CD4-positive, alpha-beta T cell (primary cell): ENCODE measurements at regions of chr1 and their contacts with region 1.

Region 1: DNA sequence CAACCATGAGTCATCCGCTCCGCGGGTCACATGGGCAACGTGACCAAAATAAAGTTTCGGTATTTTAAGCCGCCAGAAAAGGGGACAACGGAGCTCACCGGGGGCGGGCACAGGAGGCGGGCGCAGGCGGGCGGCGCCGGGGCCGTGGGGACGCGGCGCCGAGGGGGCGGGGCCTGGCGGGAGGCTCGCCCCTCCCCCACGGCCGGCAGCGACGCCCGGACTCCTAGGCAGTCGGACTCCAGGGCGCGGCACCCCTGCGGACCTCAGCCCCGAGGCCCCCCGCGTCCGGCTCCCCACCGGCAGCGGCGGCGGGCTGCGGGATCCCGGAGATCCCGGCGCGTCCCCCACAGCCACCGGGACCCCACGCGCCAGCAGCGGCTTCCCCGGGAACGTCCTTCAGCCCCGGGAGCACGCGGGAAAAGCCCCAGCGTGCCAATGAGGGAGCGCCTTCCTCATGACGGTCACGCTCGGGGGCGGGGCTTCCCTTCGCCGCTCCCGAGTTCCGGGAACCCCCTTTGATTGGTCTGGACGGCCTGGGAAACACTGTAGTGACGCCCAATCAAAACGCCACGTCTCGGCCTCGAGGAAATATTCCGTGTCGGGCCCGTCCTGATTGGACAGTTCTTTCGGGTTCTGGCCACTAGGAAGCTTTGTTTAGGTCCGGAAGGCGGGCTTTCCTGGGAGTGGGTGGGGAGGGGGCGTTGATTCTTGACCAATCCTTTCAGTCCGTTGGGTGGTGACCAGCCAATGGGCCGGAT is 515 bp upstream of the CAMTA1 start:
- DNase-seq: peak; percentile 96 to 100 (median 99)
- ATAC-seq: peak; percentile 23
- H3K4me3 ChIP-seq: peak overlapping the region; percentile 80
- H3K4me3 Mint-ChIP-seq: peak overlapping the region; percentile 97
- H3K27ac ChIP-seq: peak overlapping the region; percentile 88 to 92
- H3K27ac Mint-ChIP-seq: peak overlapping the region; percentile 89
- H3K4me1 ChIP-seq: peaks cover 25% of the 10 kb centered on the region
- H3K4me1 Mint-ChIP-seq: peaks cover 51% of the 10 kb centered on the region
- H3K27me3 ChIP-seq: no peaks in the 10 kb centered on the region
- H3K27me3 Mint-ChIP-seq: no peaks in the 10 kb centered on the region
- CTCF ChIP-seq: no peak

Region 2: DNA sequence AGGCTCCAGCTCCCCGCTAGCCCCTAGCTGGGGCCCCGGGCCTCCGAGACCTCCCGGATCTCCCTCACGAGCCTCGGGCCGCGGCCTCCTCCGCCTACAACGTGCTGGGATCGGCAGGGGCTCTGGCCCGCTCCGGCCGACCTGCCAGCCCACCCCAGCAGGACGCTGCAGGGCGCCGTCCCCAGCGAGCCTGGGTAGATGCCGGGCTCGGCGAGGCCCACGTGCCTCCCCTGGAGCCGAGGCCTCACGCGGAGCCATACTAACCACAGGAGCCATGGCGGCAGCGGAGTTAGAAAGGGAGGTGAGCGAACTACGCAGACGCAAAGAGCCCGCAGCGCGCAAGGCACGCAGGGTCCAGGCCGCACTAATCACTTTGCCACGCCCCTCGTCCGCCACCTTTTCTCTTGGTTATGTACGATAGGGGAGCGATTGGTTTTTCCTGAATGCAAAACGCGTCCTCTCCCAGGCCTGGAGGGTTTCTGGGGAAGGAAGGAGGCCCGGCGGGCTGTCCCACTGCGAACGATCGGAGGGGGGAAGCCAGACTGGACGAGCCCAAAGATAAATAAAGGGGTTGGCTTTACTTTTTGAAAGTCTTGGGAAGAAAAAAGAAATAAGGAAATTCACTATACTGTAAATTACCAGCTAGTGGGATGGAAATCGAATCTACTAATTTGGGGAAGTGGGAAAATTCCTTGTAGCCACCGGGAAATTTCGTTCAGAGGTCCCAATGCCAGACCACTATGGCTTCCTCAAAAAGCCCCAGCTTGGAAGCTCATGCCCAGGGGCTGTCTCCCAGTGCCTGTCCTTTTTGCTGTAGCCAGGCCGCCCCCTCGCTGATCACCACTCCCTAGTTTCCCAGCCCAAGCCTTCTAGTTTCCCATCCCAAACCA is 585.2 kb before region 1 on chr1 and contains the start of gene RPL22:
- CTCF ChIA-PET with region 1: no interaction called
- POLR2A ChIA-PET with region 1: no interaction called
- intact Hi-C with region 1: loop called in 1 of 2 experiments (anchors 5 kb)
- DNase-seq: peak; percentile 93 to 99 (median 96)
- ATAC-seq: peak; percentile 96
- H3K4me3 ChIP-seq: peak within 1 kb of the TSS; percentile 97
- H3K4me3 Mint-ChIP-seq: peak within 1 kb of the TSS; percentile 91
- H3K27ac ChIP-seq: peak within 1 kb of the TSS; percentile 63 to 69
- H3K27ac Mint-ChIP-seq: peak within 1 kb of the TSS; percentile 84
- H3K4me1 ChIP-seq: peaks cover 35% of the 10 kb centered on the region
- H3K4me1 Mint-ChIP-seq: peaks cover 47% of the 10 kb centered on the region
- H3K27me3 ChIP-seq: no peaks in the 10 kb centered on the region
- H3K27me3 Mint-ChIP-seq: no peaks in the 10 kb centered on the region
- CTCF ChIP-seq: no peak
- total RNA-seq, gene RPL22: 620 to 652 TPM

Region 3: DNA sequence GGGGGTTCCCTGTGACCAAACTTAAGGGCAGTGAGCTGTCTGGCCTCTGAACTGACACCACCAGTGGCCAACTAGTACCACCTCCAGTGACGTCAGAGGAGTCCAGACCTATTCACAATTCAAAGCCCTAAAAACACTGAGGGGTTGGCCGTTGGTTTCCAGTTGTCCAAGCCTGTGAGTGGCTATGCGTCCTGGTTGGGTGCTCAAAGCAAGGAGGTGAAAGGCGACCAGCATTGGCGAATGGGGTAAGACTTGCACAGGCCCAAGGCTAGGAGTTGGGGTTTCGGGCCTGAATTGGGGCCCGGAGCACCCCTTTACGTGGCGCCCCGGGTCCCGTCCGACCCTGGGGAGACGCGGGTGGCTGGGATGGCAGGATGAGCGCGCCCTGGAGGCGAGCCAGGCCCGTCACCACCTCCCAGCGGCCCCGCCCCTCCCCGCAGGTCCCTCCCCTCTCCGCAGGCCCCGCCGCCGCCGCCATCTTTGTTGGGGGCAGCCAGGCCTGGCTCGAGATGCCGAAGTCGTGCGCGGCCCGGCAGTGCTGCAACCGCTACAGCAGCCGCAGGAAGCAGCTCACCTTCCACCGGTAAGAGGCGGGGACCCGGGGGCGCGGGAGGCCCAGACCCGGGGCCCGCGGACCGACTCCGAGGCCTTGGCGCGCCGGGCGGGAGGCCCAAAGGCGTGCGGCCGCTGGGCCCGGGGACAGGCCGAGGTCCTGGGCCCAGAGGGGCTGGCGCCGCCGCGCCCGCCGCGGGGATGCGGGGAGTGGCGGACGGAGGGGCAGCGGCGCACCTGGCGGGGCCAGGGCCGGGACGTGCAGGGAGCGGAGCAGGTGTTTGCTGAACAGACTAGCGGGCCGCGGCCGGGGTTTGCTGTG is 159.8 kb before region 1 on chr1 and contains the start of gene THAP3:
- CTCF ChIA-PET with region 1: no interaction called
- POLR2A ChIA-PET with region 1: no interaction called
- intact Hi-C with region 1: loop called in 1 of 2 experiments (anchors 2 kb)
- DNase-seq: peak; percentile 86 to 95 (median 90)
- ATAC-seq: peak; percentile 98
- H3K4me3 ChIP-seq: peak within 1 kb of the TSS; percentile 72
- H3K4me3 Mint-ChIP-seq: peak within 1 kb of the TSS; percentile 94
- H3K27ac ChIP-seq: peak within 1 kb of the TSS in 1 of 2 donors; percentile 38
- H3K27ac Mint-ChIP-seq: peak within 1 kb of the TSS; percentile 84
- H3K4me1 ChIP-seq: peaks cover 31% of the 10 kb centered on the region
- H3K4me1 Mint-ChIP-seq: peaks cover 29% of the 10 kb centered on the region
- H3K27me3 ChIP-seq: no peaks in the 10 kb centered on the region
- H3K27me3 Mint-ChIP-seq: no peaks in the 10 kb centered on the region
- CTCF ChIP-seq: peak; percentile 31
- total RNA-seq, gene THAP3: 15.2 to 18.7 TPM

Region 4: DNA sequence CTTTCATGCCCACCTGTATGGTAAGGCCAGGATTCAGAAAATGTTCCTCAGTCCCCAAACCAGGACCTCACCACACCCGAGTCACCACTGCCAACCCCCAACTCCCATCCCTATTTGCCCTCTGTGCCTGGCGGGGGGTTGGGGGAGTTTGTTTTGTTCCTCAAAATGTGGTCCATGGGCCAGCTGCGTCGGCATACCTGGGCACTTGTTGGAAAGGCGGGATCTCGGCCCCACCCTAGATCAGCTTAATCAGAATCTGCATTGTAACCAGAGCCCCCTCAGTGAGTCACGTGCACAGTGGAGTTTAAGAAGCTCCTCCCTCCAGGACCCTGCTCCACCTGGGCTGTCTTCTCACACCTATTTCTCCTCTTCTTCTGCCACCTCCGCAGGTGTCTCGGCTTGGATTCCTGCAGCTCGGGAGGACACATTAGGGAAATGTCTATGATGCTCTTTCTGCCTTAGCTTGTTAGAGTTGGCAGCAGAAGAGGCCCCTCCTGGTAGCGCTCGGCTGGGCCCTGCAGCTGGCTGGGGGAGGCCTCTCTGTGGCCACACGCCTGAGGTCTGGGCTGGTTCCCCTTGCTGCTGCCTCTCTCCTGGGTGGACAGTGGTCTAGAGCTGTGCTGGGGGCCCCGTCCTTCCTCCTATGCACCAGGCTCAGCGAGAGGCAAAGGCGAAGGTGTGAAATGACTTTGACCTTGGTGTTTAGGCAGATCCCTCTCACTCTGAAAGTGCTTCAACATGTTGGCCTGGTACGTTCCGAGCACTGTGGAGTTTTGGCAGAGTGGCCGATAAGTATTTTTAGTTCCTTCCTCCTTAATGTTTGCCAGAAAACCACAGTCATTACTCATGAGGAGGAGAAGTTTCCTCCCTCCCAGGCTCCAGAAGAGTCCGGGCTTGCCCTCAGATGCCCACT is 41.3 kb before region 1 on chr1:
- CTCF ChIA-PET with region 1: no interaction called
- POLR2A ChIA-PET with region 1: interaction called, 41 read pairs
- intact Hi-C with region 1: no loop called
- DNase-seq: peak in 4 of 14 experiments; percentile 8 to 48 (median 26)
- ATAC-seq: peak; percentile 41
- H3K4me3 ChIP-seq: no peak overlapping the region
- H3K4me3 Mint-ChIP-seq: peak overlapping the region; percentile 31
- H3K27ac ChIP-seq: no peak overlapping the region
- H3K27ac Mint-ChIP-seq: peak overlapping the region; percentile 19
- H3K4me1 ChIP-seq: peaks cover 9% of the 10 kb centered on the region
- H3K4me1 Mint-ChIP-seq: peaks cover 5% of the 10 kb centered on the region
- H3K27me3 ChIP-seq: peaks cover 0 to 3% of the 10 kb centered on the region in 2 experiments
- H3K27me3 Mint-ChIP-seq: peaks cover 9% of the 10 kb centered on the region
- CTCF ChIP-seq: no peak